ENCODE measurements at regions of chr9 and their contacts with region 1.

Region 1: GRCh38 chr9:94166237-94166963 is 82.1 kb downstream of the PTPDC1 start:
- DNase-seq: peak; percentile 89 to 97 (median 95)
- H3K4me3 ChIP-seq: peak overlapping the region; percentile 63 to 99 (median 86)
- H3K27ac ChIP-seq: peak overlapping the region; percentile 83 to 100 (median 98)
- H3K27me3 ChIP-seq: no peaks in the 10 kb centered on the region
- CTCF ChIP-seq: peak in 10 of 56 donors; percentile 1 to 42 (median 11)

Region 2: GRCh38 chr9:94030318-94031179 is 135.9 kb before region 1 on chr9:
- intact Hi-C with region 1: loop called in 1 of 2 experiments (anchors 10 kb)
- DNase-seq: peak; percentile 80 to 93 (median 86)
- H3K4me3 ChIP-seq: peak overlapping the region; percentile 74 to 99 (median 90)
- H3K27ac ChIP-seq: peak overlapping the region in 46 of 59 donors; percentile 12 to 88 (median 62)
- H3K27me3 ChIP-seq: no peaks in the 10 kb centered on the region
- CTCF ChIP-seq: peak in 20 of 56 donors; percentile 9 to 50 (median 26)

Region 3: DNA sequence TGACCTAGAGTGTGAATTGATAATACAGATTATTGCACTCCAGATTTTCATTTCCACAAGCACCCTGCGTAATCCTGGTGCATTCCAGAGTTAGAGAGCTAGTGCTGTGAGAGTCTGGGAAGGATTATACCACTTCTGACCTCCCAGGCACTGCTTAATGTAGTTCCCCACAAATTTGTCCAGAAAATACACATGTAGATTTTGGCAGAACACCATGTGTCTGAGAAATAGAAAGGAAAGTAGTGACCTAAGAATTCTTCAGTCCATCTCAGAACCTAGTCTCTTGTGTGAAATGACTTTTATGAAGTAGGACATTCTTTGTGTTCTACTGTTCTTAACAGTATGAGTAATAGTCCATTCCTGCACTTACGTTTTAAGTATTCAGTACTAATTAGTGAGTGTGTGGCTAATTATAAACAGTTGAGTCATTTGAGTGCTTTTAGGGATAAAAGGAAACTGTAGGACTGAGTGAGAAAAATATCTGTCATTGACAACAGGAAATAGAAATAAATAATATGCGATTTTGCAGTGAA is 109.9 kb before region 1 on chr9:
- intact Hi-C with region 1: no loop called
- DNase-seq: no peak
- H3K4me3 ChIP-seq: no peak overlapping the region
- H3K27ac ChIP-seq: no peak overlapping the region
- H3K27me3 ChIP-seq: no peaks in the 10 kb centered on the region
- CTCF ChIP-seq: no peak

Region 4: GRCh38 chr9:94084314-94084713 is 82.1 kb before region 1 on chr9 and contains the start of gene PTPDC1:
- intact Hi-C with region 1: loop called (anchors 1 to 5 kb)
- DNase-seq: peak; percentile 30 to 93 (median 76)
- H3K4me3 ChIP-seq: peak within 1 kb of the TSS; percentile 36 to 87 (median 66)
- H3K27ac ChIP-seq: peak within 1 kb of the TSS; percentile 15 to 93 (median 80)
- H3K27me3 ChIP-seq: no peaks in the 10 kb centered on the region
- CTCF ChIP-seq: peak in 3 of 56 donors; percentile 11 to 17 (median 16)
- total RNA-seq, gene PTPDC1: 15.0 to 85.4 (median 26.8) TPM

Region 5: GRCh38 chr9:94108584-94108983 is 57.8 kb before region 1 on chr9:
- intact Hi-C with region 1: loop called in 1 of 2 experiments (anchors 5 kb)
- DNase-seq: no peak
- H3K4me3 ChIP-seq: no peak overlapping the region
- H3K27ac ChIP-seq: peak overlapping the region in 52 of 59 donors; percentile 1 to 98 (median 80)
- H3K27me3 ChIP-seq: no peaks in the 10 kb centered on the region
- CTCF ChIP-seq: no peak

Region 6: DNA sequence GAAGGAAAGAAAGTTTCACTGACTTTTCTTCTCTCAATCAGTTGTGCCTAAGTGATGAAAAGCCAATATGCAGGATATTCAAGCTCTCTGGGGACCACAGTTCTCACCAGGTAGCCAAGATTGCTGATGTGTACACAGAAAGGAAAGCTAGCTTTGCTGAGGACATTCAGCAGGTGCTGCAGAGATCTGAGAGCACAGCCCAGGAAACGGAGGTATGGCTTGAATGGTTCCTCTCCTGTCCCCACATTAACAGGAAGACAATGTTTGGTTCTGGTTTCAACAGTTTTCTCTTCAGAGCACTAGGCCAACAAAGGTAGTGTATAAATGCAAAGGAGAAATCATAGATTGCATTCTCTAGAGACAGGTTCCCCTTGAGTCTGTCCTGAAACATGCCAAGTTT is 12.5 kb before region 1 on chr9:
- intact Hi-C with region 1: no loop called
- DNase-seq: no peak
- H3K4me3 ChIP-seq: no peak overlapping the region
- H3K27ac ChIP-seq: no peak overlapping the region
- H3K27me3 ChIP-seq: no peaks in the 10 kb centered on the region
- CTCF ChIP-seq: no peak

Region 7: DNA sequence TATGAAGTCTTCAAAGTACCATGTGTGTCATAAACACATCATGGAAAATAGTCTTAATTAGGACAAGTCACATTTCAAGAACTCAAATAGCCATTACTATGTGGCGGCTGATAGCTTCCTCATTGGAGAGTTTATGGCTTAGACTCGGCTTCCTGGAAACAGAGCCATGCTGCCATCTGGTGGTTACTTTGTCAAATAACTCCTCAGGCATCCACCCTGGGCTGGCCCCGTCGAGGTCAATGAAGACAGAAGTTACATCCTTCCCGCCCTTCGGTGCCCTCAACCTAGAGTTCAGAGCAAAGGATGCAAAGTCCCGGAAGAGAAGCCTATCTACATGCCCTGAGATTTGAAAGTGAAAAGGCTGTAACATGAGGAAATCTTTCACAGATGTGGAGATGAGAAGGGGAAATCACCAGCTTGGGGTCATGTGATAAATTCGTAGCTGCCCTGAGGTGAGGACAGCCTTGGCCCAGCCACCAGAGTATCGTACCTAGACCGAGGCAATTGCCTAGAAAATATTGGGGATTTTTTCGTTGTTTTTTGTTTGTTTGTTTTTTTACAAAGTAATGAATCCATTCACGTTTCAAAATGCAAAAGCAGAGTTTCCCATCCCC is 47.2 kb after region 1 on chr9:
- intact Hi-C with region 1: loop called in 1 of 2 experiments (anchors 5 kb)
- DNase-seq: peak; percentile 29 to 76 (median 69)
- H3K4me3 ChIP-seq: peak overlapping the region in 1 of 59 donors; percentile 39
- H3K27ac ChIP-seq: no peak overlapping the region
- H3K27me3 ChIP-seq: peaks cover 0 to 4% (median 0%) of the 10 kb centered on the region in 45 donors
- CTCF ChIP-seq: peak; percentile 76 to 98 (median 92)

Measured in dorsolateral prefrontal cortex (tissue), 120 donors.